A549 (cell line): ENCODE measurements at regions of chr17 and their contacts with region 1.

Region 1: DNA sequence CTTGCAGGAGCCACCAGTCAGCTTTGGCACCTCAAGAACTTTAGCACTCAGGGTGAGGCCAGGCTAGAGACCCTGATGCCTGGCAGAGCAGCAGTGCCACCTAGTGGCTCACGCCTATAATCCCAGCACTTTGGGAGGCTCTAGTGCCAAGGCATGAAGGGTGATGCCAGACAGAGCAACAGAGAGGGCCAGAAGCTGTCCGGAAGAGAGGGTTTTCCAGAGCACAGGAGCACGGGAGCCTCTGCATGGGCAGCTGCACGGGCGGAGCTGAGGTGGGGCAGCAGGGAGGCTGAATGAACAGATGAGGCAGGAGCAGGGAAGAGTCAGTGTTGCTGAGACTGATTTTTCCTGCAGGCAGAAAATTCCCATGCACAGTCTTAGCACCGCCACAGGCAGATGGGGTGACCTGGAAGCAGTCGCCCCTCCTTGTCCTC is 38.9 kb downstream of the MYH3 start:
- DNase-seq: peak; percentile 85 to 87
- ATAC-seq: peak; percentile 91 to 95
- H3K4me3 ChIP-seq: no peak overlapping the region
- H3K27ac ChIP-seq: peak overlapping the region; percentile 41 to 43; a peak in 3 of 6 replicates
- H3K4me1 ChIP-seq: peaks cover 17% of the 10 kb centered on the region; the same call in 1 of the 3 replicates
- CTCF ChIP-seq: peak; percentile 95
- EP300 ChIP-seq: no peak
- POLR2A ChIP-seq: no peak
- RAD21 ChIP-seq: peak; percentile 82 to 90

Region 2: DNA sequence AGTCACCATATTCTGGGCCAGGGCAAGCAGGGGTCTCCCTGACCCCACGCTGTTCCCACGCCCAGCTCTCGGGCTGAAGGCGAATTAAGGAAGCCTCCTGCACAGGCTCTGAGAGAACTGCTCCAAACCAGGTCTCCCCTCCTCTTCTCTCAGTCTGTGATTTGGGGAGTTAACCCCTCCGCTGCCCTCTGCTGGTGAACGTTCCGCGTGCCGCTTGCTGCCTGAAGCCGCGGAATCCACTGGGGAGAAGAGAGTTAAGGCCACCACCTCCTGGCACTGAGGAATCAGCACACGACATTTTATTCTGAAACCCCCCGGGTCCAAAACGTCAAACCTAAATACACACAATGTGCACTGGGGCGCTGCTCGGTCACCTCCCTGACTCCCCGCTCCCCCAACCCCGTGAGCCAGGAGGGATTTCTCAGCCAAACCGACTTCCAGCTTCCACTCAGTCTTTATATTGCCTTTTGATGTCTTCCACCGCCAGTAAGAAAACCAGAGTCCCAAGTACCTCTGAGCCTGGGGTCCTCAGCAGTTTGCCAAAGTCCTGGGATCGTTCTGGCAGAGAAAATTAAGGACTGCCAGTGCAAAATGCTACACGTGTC is 658.7 kb before region 1 on chr17:
- CTCF ChIA-PET with region 1: interaction called, 72 read pairs
- POLR2A ChIA-PET with region 1: no interaction called
- DNase-seq: peak; percentile 74 to 91
- ATAC-seq: peak; percentile 77 to 91
- H3K4me3 ChIP-seq: no peak overlapping the region
- H3K27ac ChIP-seq: peak overlapping the region in 1 of 2 experiments; percentile 26; a peak in 2 of 6 replicates
- H3K4me1 ChIP-seq: peaks cover 4% of the 10 kb centered on the region; the same call in 1 of the 3 replicates
- CTCF ChIP-seq: peak; percentile 85
- EP300 ChIP-seq: no peak
- POLR2A ChIP-seq: no peak
- RAD21 ChIP-seq: peak; percentile 76 to 77

Region 3: GRCh38 chr17:10295728-10296343 is 322.4 kb before region 1 on chr17:
- CTCF ChIA-PET with region 1: interaction called, 135 read pairs
- POLR2A ChIA-PET with region 1: interaction called, 4 read pairs
- DNase-seq: peak; percentile 69 to 70
- ATAC-seq: peak; percentile 83 to 96
- H3K4me3 ChIP-seq: no peak overlapping the region
- H3K27ac ChIP-seq: no peak overlapping the region
- H3K4me1 ChIP-seq: no peaks in the 10 kb centered on the region
- CTCF ChIP-seq: peak; percentile 62
- EP300 ChIP-seq: no peak
- POLR2A ChIP-seq: no peak
- RAD21 ChIP-seq: peak; percentile 65 to 78; a peak in 4 of 5 replicates

Region 4: GRCh38 chr17:10349403-10349802 is 268.8 kb before region 1 on chr17:
- CTCF ChIA-PET with region 1: interaction called, 18 read pairs
- POLR2A ChIA-PET with region 1: no interaction called
- DNase-seq: peak in 1 of 2 experiments; percentile 27
- ATAC-seq: peak; percentile 56 to 63; a peak in 4 of 6 replicates
- H3K4me3 ChIP-seq: no peak overlapping the region
- H3K27ac ChIP-seq: no peak overlapping the region
- H3K4me1 ChIP-seq: no peaks in the 10 kb centered on the region
- CTCF ChIP-seq: no peak
- EP300 ChIP-seq: no peak
- POLR2A ChIP-seq: no peak
- RAD21 ChIP-seq: no peak

Region 5: DNA sequence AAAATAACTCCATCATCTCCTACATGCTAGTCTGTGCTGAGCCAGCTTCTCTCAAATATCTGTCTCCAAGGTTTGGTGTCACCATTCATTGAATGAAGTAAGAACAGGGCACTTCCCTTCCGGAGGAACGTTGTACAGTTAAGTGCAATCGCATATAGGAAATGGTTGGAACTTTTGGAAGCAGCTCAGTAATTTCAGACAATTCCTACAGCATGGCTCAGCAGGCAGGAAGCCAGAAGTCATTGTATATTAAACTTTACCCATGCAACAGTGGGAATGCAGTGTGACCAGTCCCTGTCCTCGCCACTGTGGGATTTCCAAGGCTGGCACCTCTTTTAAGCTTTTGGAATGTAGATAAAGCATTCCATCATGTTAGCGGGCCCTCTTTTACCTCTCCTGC is 17.6 kb before region 1 on chr17:
- CTCF ChIA-PET with region 1: interaction called, 109 read pairs
- POLR2A ChIA-PET with region 1: no interaction called
- DNase-seq: no peak
- ATAC-seq: no peak
- H3K4me3 ChIP-seq: no peak overlapping the region
- H3K27ac ChIP-seq: no peak overlapping the region
- H3K4me1 ChIP-seq: no peaks in the 10 kb centered on the region
- CTCF ChIP-seq: no peak
- EP300 ChIP-seq: no peak
- POLR2A ChIP-seq: no peak
- RAD21 ChIP-seq: no peak

Region 6: GRCh38 chr17:10646392-10646990 is 28.3 kb after region 1 on chr17:
- CTCF ChIA-PET with region 1: interaction called, 194 read pairs
- POLR2A ChIA-PET with region 1: no interaction called
- DNase-seq: peak; percentile 55 to 74
- ATAC-seq: peak; percentile 85 to 91
- H3K4me3 ChIP-seq: no peak overlapping the region
- H3K27ac ChIP-seq: no peak overlapping the region
- H3K4me1 ChIP-seq: no peaks in the 10 kb centered on the region
- CTCF ChIP-seq: peak; percentile 83
- EP300 ChIP-seq: no peak
- POLR2A ChIP-seq: no peak
- RAD21 ChIP-seq: peak; percentile 69 to 71

Region 7: DNA sequence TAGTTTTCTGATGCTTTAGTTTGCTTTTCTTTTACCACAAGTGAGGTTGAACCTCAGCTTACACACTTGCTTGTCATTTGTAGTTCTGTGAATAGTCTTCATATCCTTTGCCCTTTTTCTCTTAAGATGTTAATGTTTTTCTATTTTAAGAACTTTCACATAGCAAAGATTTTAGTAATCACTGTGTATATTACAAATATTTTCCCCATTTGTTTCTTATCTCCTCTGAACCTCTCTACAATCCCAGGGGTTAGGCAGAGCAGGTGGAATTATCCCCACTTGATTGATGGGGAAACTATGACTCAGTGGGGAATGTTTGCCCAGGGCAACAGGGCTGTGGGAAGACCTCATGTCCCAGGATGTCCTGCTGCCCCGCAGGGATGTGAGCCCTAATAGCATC is 50.6 kb after region 1 on chr17:
- CTCF ChIA-PET with region 1: interaction called, 15 read pairs
- POLR2A ChIA-PET with region 1: no interaction called
- DNase-seq: peak in 1 of 2 experiments; percentile 17
- ATAC-seq: peak in 1 of 2 experiments; percentile 54; a peak in 2 of 6 replicates
- H3K4me3 ChIP-seq: no peak overlapping the region
- H3K27ac ChIP-seq: no peak overlapping the region
- H3K4me1 ChIP-seq: no peaks in the 10 kb centered on the region
- CTCF ChIP-seq: no peak
- EP300 ChIP-seq: no peak
- POLR2A ChIP-seq: no peak
- RAD21 ChIP-seq: no peak

Region 8: DNA sequence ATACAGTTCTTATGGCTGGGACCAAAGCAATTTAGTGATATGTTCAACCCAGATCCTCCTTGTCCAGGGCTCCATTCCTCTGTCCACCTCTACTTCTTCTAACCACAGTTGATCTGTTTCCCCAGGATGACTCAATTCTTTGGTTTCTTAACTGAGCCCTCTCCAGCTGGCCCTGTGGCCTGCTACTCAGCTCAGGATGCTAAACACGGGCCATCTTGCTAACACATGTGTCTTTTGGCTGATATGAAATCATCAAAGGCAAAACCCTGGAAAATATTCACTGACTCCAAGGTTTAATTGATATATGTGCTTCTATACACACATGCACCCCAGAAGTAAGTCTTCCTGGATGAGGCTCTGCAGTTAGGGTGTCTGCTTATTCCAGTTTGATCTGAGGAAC is 666.6 kb after region 1 on chr17:
- CTCF ChIA-PET with region 1: no interaction called
- POLR2A ChIA-PET with region 1: no interaction called
- DNase-seq: no peak
- ATAC-seq: no peak
- H3K4me3 ChIP-seq: no peak overlapping the region
- H3K27ac ChIP-seq: no peak overlapping the region
- H3K4me1 ChIP-seq: no peaks in the 10 kb centered on the region
- CTCF ChIP-seq: no peak
- EP300 ChIP-seq: no peak
- POLR2A ChIP-seq: no peak
- RAD21 ChIP-seq: no peak